ENCODE measurements at regions of chr2 and their contacts with region 1.

Region 1: GRCh38 chr2:27723372-27724144 is 48.0 kb upstream of the MRPL33 start:
- DNase-seq: peak in 1 of 2 donors; percentile 90
- H3K4me3 ChIP-seq: no peak overlapping the region
- H3K27ac ChIP-seq: peak overlapping the region; percentile 87 to 95
- H3K4me1 ChIP-seq: peaks cover 24 to 45% of the 10 kb centered on the region in 2 donors
- H3K27me3 ChIP-seq: no peaks in the 10 kb centered on the region
- CTCF ChIP-seq: peak; percentile 84 to 97 (median 90)

Region 2: DNA sequence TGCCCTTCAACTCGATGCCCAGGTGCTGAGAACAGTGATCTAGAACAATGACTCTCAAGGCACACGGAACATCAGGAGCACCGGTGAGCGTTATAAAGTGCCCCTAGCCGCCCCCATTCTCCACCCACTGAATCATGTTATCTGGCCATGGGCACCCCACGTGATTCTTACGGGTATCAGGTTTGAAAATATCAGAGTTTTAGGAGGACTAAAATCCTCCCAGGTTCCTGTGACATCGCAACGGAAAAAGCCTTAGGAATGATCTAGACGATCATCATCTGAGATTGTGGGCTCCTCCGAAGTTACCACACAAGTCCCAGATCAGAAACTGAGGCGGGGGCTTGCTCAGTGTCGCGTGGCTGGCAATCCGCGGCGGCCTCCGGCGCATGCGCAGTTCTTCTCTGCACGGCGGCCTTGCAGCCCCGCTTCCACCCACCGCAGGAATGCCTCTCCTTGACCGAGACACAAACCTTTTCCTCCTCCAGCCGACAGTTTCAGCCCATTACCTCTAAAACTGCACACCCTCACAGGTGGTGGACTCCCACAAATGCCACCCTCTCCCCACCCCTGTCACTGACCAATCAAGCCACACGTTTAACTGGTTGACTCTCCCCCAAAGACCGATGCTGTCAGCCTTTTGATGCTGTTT is 42.2 kb after region 1 on chr2:
- intact Hi-C with region 1: no loop called
- DNase-seq: peak in 1 of 2 donors; percentile 78
- H3K4me3 ChIP-seq: peak overlapping the region; percentile 41 to 50
- H3K27ac ChIP-seq: no peak overlapping the region
- H3K4me1 ChIP-seq: peaks cover 0 to 4% of the 10 kb centered on the region in 2 donors
- H3K27me3 ChIP-seq: no peaks in the 10 kb centered on the region
- CTCF ChIP-seq: no peak

Region 3: DNA sequence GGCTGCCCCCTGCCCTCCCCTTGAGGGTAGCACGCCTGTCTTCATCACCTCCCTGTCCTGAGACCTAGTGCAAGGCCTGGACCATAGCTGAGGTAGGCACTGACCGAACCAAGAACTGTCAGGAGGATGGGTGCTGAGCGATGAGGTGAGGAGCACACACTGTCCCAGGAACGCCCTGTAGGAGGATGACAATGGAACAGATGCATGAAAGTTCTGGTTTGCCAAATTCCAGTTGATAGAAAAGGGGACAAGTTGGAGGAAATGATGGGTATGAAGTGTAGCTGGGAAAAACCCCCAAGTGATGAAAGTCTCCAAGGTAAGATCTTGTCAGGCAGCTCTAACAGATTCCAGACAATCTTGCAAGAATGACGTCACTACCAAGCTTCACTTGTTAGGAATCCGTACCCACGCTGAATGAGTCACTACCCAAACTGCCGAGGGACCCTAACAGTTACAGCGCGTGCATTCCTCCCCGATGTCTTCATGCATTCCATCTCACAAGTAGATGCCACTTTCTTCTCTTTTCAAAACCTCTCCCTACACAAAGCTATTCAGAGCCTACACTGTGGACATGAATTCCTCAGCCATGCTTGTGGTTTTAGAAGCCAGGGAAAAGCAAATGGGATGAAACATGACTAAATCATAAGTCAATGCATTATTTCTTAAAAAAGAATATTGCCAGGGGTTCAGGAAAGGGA is 75.5 kb after region 1 on chr2:
- intact Hi-C with region 1: loop called (anchors 2 kb)
- DNase-seq: peak; percentile 58 to 95
- H3K4me3 ChIP-seq: no peak overlapping the region
- H3K27ac ChIP-seq: peak overlapping the region; percentile 96 to 98
- H3K4me1 ChIP-seq: peaks cover 30 to 57% of the 10 kb centered on the region in 2 donors
- H3K27me3 ChIP-seq: no peaks in the 10 kb centered on the region
- CTCF ChIP-seq: no peak

Region 4: DNA sequence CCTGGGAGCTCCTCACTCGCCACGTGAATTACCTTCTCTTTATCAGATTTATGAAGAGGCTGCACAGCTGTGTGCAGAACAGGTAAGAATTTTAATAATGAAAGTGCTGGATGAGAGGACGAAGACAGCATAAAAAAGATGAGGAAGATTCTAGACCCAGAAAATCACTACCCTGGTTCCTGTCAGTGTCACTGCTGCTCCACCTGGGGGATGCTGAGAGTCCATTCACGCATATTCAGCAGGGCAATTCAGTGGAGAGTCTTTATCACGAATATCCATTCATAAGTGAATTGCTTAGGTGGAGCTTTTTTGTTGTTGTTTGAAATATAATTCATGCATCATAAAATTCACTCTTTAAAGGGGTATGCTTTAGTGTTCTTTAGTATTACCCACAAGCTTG is 100.0 kb after region 1 on chr2:
- intact Hi-C with region 1: loop called (anchors 5 kb)
- DNase-seq: no peak
- H3K4me3 ChIP-seq: peak overlapping the region in 1 of 2 donors; percentile 54
- H3K27ac ChIP-seq: peak overlapping the region; percentile 0 to 40
- H3K4me1 ChIP-seq: peaks cover 0 to 8% of the 10 kb centered on the region in 2 donors
- H3K27me3 ChIP-seq: no peaks in the 10 kb centered on the region
- CTCF ChIP-seq: peak; percentile 35 to 61 (median 44)

Region 5: DNA sequence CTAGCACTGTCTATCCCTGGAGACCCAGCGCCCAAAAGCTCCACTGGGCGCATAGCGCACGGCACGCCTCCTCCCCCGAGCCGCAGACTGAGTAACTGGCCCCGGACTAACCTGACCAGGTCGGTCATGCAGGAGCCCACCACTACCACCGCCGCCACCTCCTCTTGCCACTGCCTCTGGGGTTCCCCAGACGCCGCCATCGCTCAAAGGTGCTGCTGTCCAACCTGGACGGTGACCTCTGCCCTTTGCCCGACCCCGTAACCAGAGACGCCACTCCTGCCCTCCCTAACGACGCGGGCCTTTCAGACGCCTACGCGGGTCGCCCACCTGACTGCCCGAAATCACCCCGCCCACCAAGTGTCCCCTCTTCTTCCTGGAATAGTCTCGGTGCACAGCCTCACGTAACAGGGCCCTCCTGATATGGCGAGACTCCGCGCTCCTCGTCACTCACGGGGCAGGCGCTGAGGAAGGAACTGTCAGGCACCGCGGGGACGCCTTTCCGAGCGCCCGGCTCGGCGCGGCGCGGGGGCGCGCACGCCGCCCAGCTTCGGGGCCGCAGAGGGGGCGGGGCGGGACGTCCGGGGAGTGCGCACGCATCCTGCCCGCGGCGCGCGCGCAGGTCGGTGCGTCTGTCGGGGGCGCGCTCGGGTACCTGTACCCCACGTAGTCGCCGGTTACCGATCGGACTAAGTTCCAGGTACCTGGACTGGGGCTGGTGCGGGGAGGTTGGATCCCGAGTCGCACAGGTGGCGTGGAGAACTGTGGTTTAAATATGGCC is 166.8 kb after region 1 on chr2 and contains the starts of genes BABAM2 and RBKS:
- intact Hi-C with region 1: loop called (anchors 5 kb)
- DNase-seq: peak; percentile 75 to 91
- H3K4me3 ChIP-seq: peak within 1 kb of the TSS; percentile 69 to 72
- H3K27ac ChIP-seq: peak within 1 kb of the TSS; percentile 90 to 95
- H3K4me1 ChIP-seq: peaks cover 0 to 21% of the 10 kb centered on the region in 2 donors
- H3K27me3 ChIP-seq: no peaks in the 10 kb centered on the region
- CTCF ChIP-seq: no peak
- total RNA-seq, gene BABAM2: 19.6 TPM
- total RNA-seq, gene RBKS: not detected